ENCODE measurements at regions of chr22 and their contacts with region 1.

Region 1: GRCh38 chr22:29531419-29531818 is 22.1 kb downstream of the THOC5 start:
- DNase-seq: no peak
- H3K4me3 ChIP-seq: no peak overlapping the region
- H3K27ac ChIP-seq: no peak overlapping the region
- H3K4me1 ChIP-seq: no peaks in the 10 kb centered on the region
- H3K27me3 ChIP-seq: no peaks in the 10 kb centered on the region
- CTCF ChIP-seq: no peak

Region 2: GRCh38 chr22:29487426-29487986 is 43.9 kb before region 1 on chr22:
- CTCF ChIA-PET with region 1: no interaction called
- POLR2A ChIA-PET with region 1: no interaction called
- intact Hi-C with region 1: no loop called
- DNase-seq: no peak
- H3K4me3 ChIP-seq: no peak overlapping the region
- H3K27ac ChIP-seq: no peak overlapping the region
- H3K4me1 ChIP-seq: no peaks in the 10 kb centered on the region
- H3K27me3 ChIP-seq: no peaks in the 10 kb centered on the region
- CTCF ChIP-seq: no peak

Region 3: DNA sequence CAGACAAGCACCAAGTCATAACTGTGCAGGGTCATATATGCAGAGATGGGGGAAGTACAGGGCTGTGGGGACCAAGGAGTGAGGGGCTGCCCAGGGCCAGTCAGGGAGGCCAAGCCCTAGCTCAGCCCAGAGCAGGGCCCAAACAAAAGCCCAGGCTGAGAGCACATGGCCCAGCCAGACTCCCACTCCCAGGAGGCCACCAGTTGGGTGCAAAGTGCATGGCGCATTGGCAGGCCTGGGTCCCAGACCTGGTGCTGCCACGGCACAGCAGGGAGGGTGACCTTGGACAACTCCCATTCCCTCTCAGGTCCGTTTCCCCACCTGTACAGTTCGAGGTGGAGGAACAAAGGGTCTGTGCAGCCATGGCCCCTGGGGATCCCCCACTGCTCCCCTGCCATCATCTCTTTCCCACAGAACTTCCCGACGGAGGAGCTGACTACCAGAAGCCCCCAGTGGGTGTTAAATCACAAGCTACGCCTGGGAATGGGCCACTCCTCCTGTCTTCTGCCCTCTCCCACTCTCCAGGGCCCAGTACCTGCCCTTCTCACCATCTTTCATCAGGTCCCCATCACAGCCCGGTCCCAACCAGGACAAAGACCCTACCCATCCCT is 48.9 kb after region 1 on chr22:
- CTCF ChIA-PET with region 1: no interaction called
- POLR2A ChIA-PET with region 1: interaction called, 32 read pairs
- intact Hi-C with region 1: no loop called
- DNase-seq: no peak
- H3K4me3 ChIP-seq: peak overlapping the region; percentile 93
- H3K27ac ChIP-seq: peak overlapping the region; percentile 38
- H3K4me1 ChIP-seq: no peaks in the 10 kb centered on the region
- H3K27me3 ChIP-seq: no peaks in the 10 kb centered on the region
- CTCF ChIP-seq: no peak

Measured in A673 (cell line).